ENCODE measurements at regions of chr6 and their contacts with region 1.

Region 1: GRCh38 chr6:117602151-117602898 is at the start of gene GOPC:
- DNase-seq: peak; percentile 98
- H3K4me3 ChIP-seq: peak within 1 kb of the TSS; percentile 81 to 96 (median 82)
- H3K4me3 Mint-ChIP-seq: peak within 1 kb of the TSS; percentile 99 to 100
- H3K27ac ChIP-seq: peak within 1 kb of the TSS; percentile 84 to 87
- H3K27ac Mint-ChIP-seq: peak within 1 kb of the TSS; percentile 92 to 99 (median 97)
- H3K4me1 ChIP-seq: peaks cover 26 to 40% of the 10 kb centered on the region in 2 donors
- H3K4me1 Mint-ChIP-seq: peaks cover 36% of the 10 kb centered on the region
- H3K27me3 ChIP-seq: no peaks in the 10 kb centered on the region
- H3K27me3 Mint-ChIP-seq: peaks cover 0 to 2% (median 2%) of the 10 kb centered on the region in 3 donors
- CTCF ChIP-seq: no peak
- polyA plus RNA-seq, gene GOPC: 2.7 to 8.0 (median 5.2) TPM

Region 2: GRCh38 chr6:117399924-117400323 is 202.4 kb before region 1 on chr6:
- intact Hi-C with region 1: no loop called
- DNase-seq: no peak
- H3K4me3 ChIP-seq: no peak overlapping the region
- H3K4me3 Mint-ChIP-seq: no peak overlapping the region
- H3K27ac ChIP-seq: no peak overlapping the region
- H3K27ac Mint-ChIP-seq: no peak overlapping the region
- H3K4me1 ChIP-seq: no peaks in the 10 kb centered on the region
- H3K4me1 Mint-ChIP-seq: no peaks in the 10 kb centered on the region
- H3K27me3 ChIP-seq: no peaks in the 10 kb centered on the region
- H3K27me3 Mint-ChIP-seq: no peaks in the 10 kb centered on the region
- CTCF ChIP-seq: no peak

Region 3: DNA sequence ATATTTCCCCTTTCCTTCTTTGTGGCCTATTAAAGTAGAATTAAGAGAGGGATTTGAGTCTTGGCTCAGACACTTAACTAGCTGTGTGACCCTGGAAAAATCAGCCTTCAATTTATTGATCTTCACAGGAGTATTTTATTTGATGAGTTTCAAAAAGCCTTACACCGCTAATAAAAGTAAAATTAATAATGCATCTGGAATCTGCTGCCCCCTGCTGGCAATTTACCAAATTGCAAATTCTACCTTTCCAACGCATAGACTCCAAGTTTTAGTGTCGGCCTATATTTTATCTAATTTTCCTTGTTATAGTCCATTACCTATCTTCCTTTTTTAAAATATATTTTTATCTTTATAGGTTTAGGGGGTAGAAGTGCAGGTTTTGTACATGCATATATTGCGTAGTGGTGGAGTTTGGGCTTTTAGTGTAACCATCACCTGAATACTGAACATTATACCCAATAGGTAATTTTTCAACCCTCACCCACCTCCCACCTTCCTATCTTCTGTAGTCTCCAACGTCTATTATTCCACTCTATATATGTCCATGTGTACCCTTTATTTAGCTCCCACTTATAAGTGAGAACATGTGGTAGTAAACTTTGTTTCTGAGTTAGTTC is 46.3 kb before region 1 on chr6:
- intact Hi-C with region 1: no loop called
- DNase-seq: peak; percentile 12 to 47 (median 20)
- H3K4me3 ChIP-seq: no peak overlapping the region
- H3K4me3 Mint-ChIP-seq: no peak overlapping the region
- H3K27ac ChIP-seq: no peak overlapping the region
- H3K27ac Mint-ChIP-seq: no peak overlapping the region
- H3K4me1 ChIP-seq: no peaks in the 10 kb centered on the region
- H3K4me1 Mint-ChIP-seq: peaks cover 2% of the 10 kb centered on the region
- H3K27me3 ChIP-seq: no peaks in the 10 kb centered on the region
- H3K27me3 Mint-ChIP-seq: peaks cover 0 to 4% (median 2%) of the 10 kb centered on the region in 3 donors
- CTCF ChIP-seq: peak; percentile 92

Region 4: GRCh38 chr6:117629119-117629518 is 26.8 kb after region 1 on chr6:
- intact Hi-C with region 1: no loop called
- DNase-seq: no peak
- H3K4me3 ChIP-seq: no peak overlapping the region
- H3K4me3 Mint-ChIP-seq: no peak overlapping the region
- H3K27ac ChIP-seq: no peak overlapping the region
- H3K27ac Mint-ChIP-seq: no peak overlapping the region
- H3K4me1 ChIP-seq: no peaks in the 10 kb centered on the region
- H3K4me1 Mint-ChIP-seq: no peaks in the 10 kb centered on the region
- H3K27me3 ChIP-seq: no peaks in the 10 kb centered on the region
- H3K27me3 Mint-ChIP-seq: peaks cover 0 to 3% (median 2%) of the 10 kb centered on the region in 3 donors
- CTCF ChIP-seq: no peak

Region 5: GRCh38 chr6:117674991-117675657 is 72.8 kb after region 1 on chr6 and contains the start of gene NUS1:
- intact Hi-C with region 1: loop called (anchors 2 to 5 kb)
- DNase-seq: peak; percentile 94 to 96 (median 95)
- H3K4me3 ChIP-seq: peak within 1 kb of the TSS; percentile 55 to 80 (median 74)
- H3K4me3 Mint-ChIP-seq: peak within 1 kb of the TSS; percentile 88 to 92
- H3K27ac ChIP-seq: peak within 1 kb of the TSS; percentile 51 to 83
- H3K27ac Mint-ChIP-seq: peak within 1 kb of the TSS; percentile 82 to 96 (median 90)
- H3K4me1 ChIP-seq: peaks cover 38 to 46% of the 10 kb centered on the region in 2 donors
- H3K4me1 Mint-ChIP-seq: peaks cover 45% of the 10 kb centered on the region
- H3K27me3 ChIP-seq: no peaks in the 10 kb centered on the region
- H3K27me3 Mint-ChIP-seq: peaks cover 0 to 6% (median 0%) of the 10 kb centered on the region in 3 donors
- CTCF ChIP-seq: peak; percentile 79
- polyA plus RNA-seq, gene NUS1: 8.7 to 16.8 (median 15.6) TPM

Measured in CD14-positive monocyte (primary cell).